Right lobe of liver (tissue), 6 donors: ENCODE measurements at regions of chr17 and their contacts with region 1.

Region 1: GRCh38 chr17:41655611-41656351 is 31.4 kb upstream of the KRT17 start:
- DNase-seq: no peak
- ATAC-seq: peak in 1 of 4 donors; percentile 14
- H3K4me3 ChIP-seq: no peak overlapping the region
- H3K27ac ChIP-seq: no peak overlapping the region
- H3K4me1 ChIP-seq: no peaks in the 10 kb centered on the region
- H3K27me3 ChIP-seq: no peaks in the 10 kb centered on the region
- CTCF ChIP-seq: no peak
- POLR2A ChIP-seq: no peak

Region 2: DNA sequence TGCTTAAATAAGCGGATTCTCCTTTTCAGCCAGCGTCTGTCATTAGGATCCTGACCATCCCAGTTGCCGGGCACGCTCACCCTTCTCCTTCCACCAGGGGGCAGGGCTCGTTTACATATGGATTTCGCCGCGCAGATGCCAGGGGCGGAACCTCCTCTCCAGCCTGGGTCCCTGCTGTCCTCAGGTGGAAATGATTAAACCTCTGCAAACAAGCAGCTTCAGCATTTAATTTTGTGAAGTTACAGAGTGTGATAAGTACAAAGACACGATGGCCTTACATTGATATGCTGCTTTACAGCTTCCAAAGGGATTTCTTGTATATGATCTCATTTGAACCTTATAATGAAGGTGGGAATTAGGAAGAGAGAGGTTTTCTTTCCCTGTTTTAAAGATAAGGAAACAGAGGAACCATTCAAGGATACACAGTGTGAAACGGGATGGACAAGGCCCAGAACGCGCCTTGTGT is 852.1 kb before region 1 on chr17:
- intact Hi-C with region 1: loop called in 1 of 2 experiments (anchors 10 kb)
- DNase-seq: peak; percentile 77 to 82 (median 82)
- ATAC-seq: peak; percentile 99 to 100 (median 100)
- H3K4me3 ChIP-seq: no peak overlapping the region
- H3K27ac ChIP-seq: no peak overlapping the region
- H3K4me1 ChIP-seq: peaks cover 0 to 5% (median 0%) of the 10 kb centered on the region in 4 donors
- H3K27me3 ChIP-seq: no peaks in the 10 kb centered on the region
- CTCF ChIP-seq: peak; percentile 86 to 92 (median 89)
- POLR2A ChIP-seq: no peak

Region 3: GRCh38 chr17:40915199-40915661 is 740.6 kb before region 1 on chr17:
- intact Hi-C with region 1: loop called in 1 of 2 experiments (anchors 10 kb)
- DNase-seq: no peak
- ATAC-seq: peak in 1 of 4 donors; percentile 85
- H3K4me3 ChIP-seq: no peak overlapping the region
- H3K27ac ChIP-seq: no peak overlapping the region
- H3K4me1 ChIP-seq: no peaks in the 10 kb centered on the region
- H3K27me3 ChIP-seq: no peaks in the 10 kb centered on the region
- CTCF ChIP-seq: no peak
- POLR2A ChIP-seq: no peak

Region 4: DNA sequence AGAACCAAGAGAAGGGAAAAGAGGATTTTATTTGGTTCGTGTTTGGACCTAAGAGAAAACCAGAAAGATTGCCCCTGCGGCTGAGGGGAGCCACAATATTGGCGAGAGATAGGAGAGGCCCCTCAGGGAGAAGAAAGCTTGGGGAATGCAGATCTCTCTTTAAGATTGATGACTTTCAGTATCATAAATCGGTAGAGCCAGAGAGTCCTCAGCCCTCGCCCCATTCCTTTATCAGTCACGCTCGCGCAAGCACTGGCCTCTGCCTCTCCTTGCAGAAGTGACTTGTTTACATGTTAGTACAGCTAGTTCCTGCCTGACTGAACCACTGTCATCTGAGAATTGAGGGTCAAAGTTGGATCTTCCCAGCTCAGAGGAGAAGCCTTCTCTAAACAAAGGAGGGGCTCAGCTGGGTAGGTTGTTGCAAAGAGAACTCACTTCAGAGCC is 106.2 kb before region 1 on chr17:
- intact Hi-C with region 1: loop called (anchors 10 kb)
- DNase-seq: no peak
- ATAC-seq: no peak
- H3K4me3 ChIP-seq: no peak overlapping the region
- H3K27ac ChIP-seq: no peak overlapping the region
- H3K4me1 ChIP-seq: peaks cover 0 to 7% (median 2%) of the 10 kb centered on the region in 4 donors
- H3K27me3 ChIP-seq: peaks cover 0 to 8% of the 10 kb centered on the region in 2 donors
- CTCF ChIP-seq: no peak
- POLR2A ChIP-seq: no peak

Region 5: DNA sequence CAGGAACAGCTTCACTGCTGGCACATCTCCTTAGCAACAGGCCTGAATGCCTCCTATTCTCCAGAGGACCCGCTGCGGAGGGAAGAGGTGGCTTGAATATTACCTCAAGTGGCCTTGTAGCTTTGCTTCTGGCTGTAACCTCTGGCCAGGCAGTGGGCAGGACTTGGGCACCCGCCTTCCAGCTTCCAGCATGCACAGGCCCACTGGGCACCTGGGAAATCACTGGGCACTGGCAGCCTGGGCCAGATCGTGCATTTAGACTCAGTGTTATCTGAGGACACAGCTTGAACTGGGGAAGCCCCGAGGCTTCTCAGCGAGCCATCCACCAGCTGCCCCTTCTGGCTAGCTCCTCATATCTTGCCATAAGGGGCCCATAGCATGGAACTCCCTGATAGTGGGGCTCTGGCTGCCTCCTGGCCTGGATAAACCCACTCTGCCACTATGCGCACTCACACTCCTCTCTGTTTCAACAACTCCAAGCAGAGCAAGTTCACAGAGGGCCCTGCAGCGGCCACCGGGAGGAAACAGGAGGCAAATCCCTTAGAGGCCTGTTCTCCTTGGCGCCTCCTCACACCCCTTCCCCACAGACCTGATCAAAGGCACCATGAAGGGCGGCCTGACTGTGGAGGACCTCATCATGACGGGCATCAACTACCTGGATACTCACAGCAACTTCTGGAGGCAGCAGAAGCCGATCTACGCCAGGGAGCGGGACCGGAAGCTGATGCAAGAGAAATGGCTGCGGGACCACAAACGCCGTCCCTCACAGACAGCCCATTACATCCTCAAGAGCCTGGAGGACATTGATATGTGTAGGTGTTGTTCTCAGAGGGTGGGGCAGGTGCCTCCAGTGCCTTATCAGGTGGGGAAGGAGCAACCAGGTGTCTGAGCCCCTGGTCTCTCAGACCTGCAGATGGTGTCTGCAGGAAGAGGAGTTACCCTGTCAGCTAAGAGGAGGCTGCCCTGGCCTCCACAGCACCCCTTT is 282.5 kb after region 1 on chr17:
- intact Hi-C with region 1: no loop called
- DNase-seq: peak; percentile 78 to 90 (median 90)
- ATAC-seq: peak; percentile 88 to 94 (median 88)
- H3K4me3 ChIP-seq: no peak overlapping the region
- H3K27ac ChIP-seq: peak overlapping the region in 2 of 3 donors; percentile 50 to 61
- H3K4me1 ChIP-seq: peaks cover 0 to 28% (median 8%) of the 10 kb centered on the region in 4 donors
- H3K27me3 ChIP-seq: no peaks in the 10 kb centered on the region
- CTCF ChIP-seq: no peak
- POLR2A ChIP-seq: no peak